ENCODE measurements at regions of chr3 and their contacts with region 1.

Region 1: GRCh38 chr3:45464336-45465170 is 76.2 kb downstream of the LARS2 start:
- DNase-seq: peak; percentile 19
- H3K4me3 ChIP-seq: no peak overlapping the region
- H3K27ac ChIP-seq: no peak overlapping the region
- H3K4me1 ChIP-seq: peaks cover 0 to 6% (median 0%) of the 10 kb centered on the region in 4 donors
- H3K27me3 ChIP-seq: no peaks in the 10 kb centered on the region
- CTCF ChIP-seq: no peak
- EP300 ChIP-seq: no peak
- POLR2A ChIP-seq: no peak

Region 2: DNA sequence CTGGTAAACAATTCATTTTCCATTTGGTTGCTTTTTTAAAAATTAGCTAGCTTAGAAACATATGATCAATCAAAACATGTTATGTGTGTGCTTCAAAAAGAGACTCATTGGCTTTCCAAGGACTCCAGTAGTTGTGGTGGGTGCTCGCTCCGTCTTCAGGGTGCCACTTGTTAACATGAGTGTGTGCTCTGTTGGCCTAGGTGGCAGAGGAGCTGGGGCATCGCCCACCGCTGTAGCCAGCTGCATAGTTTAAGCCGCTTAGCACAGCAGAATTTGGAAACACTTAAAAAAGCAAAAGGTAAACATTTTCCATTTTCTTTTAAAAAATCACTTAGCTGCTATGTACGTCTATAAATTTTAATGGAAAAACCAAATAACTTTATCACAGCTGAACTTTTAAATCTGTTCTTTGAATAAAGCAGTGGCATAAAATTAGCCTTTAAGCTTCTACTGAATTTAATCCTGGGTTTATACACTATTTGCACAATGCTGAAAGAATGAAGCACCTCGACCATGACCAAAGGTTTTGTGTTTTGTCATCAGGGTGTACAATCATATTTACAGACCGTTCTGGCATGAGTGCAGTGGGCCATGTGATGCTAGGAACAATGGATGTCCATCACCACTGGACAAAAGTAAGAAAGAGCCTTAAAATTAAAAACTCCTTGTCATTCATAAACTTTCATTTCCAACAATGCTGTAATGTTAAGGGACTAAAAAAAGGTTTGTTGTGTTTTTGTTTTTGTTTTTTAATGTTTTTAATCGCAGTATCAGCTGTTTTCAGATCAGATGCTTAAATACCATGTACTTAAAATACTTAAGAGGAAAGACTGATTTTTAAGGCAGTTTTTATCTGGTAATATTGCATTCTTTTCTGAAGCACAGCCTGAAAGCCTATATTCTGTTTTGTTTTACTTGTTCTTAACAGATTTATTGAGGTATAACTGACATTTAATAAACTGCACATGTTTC is 1068.1 kb before region 1 on chr3:
- in situ Hi-C with region 1: no loop called
- intact Hi-C with region 1: loop called (anchors 10 kb)
- DNase-seq: no peak
- H3K4me3 ChIP-seq: no peak overlapping the region
- H3K27ac ChIP-seq: no peak overlapping the region
- H3K4me1 ChIP-seq: no peaks in the 10 kb centered on the region
- H3K27me3 ChIP-seq: no peaks in the 10 kb centered on the region
- CTCF ChIP-seq: no peak
- EP300 ChIP-seq: no peak
- POLR2A ChIP-seq: no peak

Region 3: GRCh38 chr3:45188719-45189659 is 275.6 kb before region 1 on chr3:
- in situ Hi-C with region 1: no loop called
- intact Hi-C with region 1: no loop called
- DNase-seq: no peak
- H3K4me3 ChIP-seq: no peak overlapping the region
- H3K27ac ChIP-seq: peak overlapping the region in 2 of 4 donors; percentile 15 to 26
- H3K4me1 ChIP-seq: peaks cover under 1 to 29% (median 5%) of the 10 kb centered on the region in 4 donors
- H3K27me3 ChIP-seq: no peaks in the 10 kb centered on the region
- CTCF ChIP-seq: no peak
- EP300 ChIP-seq: no peak
- POLR2A ChIP-seq: no peak

Region 4: GRCh38 chr3:45507820-45508317 is 43.3 kb after region 1 on chr3:
- in situ Hi-C with region 1: no loop called
- intact Hi-C with region 1: no loop called
- DNase-seq: no peak
- H3K4me3 ChIP-seq: no peak overlapping the region
- H3K27ac ChIP-seq: peak overlapping the region in 3 of 4 donors; percentile 35 to 48 (median 40)
- H3K4me1 ChIP-seq: no peaks in the 10 kb centered on the region
- H3K27me3 ChIP-seq: no peaks in the 10 kb centered on the region
- CTCF ChIP-seq: no peak
- EP300 ChIP-seq: no peak
- POLR2A ChIP-seq: no peak